Activated T-helper 2 cell treated with anti-CD3 and anti-CD28 coated beads, Interferon-gamma antibody, Interleukin-2, Interleukin-4, amounts not matched to agents 10 μg/mL and 5 μg/mL and 100 μg/mL, durations not matched to agents 14 hours and 24 hours and 36 hours (primary cell): ENCODE measurements at regions of chr6 and their contacts with region 1.

Region 1: DNA sequence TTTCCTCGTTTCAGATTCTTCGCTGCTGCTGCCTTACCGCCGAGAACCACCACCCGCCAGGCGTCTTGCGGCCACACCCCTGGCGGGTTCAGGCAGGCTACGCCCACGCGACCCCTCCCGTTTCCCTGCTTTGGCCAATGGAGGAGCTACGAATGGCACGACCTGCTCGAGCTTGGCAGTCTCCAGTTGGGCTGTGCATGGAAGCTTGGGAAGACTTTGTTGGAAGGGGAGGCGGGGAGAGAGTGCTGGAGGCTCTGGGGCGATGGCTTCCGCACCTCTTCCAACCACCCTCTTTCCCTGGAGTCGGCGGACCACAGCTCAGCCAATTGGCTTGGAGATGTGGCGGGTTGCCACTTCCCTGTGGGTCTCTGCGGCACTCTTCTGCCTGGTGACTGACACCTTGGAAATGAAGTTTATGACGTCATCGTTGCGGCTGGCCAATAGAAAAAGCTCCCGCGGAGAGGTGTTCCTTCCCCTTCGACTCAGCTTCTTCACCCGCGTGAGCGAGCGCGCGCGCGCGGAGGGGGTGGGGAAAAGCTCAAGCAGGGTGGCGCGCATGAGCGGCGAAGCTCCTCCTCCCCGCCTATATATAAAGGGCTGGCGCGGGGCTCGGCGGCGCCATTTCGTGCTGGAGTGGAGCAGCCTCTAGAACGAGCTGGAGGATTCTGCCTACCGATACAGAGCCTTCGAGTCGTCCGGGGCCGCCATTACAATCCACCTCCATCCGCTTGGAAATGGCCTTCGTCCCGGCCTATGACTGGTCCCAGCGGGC is 3.4 kb downstream of the BRD2 start:
- DNase-seq: peak; percentile 99
- H3K4me3 Mint-ChIP-seq: peak overlapping the region; percentile 94
- H3K27ac Mint-ChIP-seq: peak overlapping the region; percentile 98
- H3K4me1 Mint-ChIP-seq: peaks cover 28% of the 10 kb centered on the region
- H3K27me3 Mint-ChIP-seq: no peaks in the 10 kb centered on the region

Region 2: DNA sequence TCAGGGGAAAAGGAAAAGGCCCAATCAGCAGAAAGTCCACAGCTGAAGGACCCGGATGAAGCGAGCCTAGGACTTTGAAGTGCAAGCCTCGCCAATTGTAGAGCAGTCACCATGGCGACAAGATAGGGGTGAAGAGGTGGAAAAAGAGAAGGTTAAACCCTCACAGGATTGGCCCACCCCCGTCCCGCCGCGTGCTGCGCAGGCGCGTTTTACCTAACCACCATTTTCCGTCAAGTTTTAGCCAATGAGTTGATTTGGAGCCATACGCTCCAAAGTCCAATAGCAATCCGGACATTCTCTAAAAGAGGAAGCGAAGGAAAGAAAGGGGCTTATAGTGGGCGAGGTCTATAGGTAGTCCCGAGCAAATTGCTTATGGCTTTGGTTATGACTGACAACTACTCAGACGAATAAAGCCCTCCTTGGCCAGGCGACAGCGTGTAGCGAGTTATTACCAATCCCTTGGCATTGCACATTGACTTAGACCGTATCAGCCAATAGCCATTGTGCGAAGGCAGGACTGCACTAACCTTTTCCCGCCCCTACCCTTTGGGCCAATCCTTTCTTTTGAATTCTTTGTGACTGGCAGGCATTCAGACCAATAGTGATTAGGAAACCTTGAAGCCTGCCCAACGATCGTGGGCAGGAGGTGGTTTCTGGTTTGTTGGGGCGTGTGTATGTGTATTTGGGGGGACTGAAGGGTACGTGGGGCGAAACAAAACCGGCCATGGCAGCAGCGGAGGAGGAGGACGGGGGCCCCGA is 793.8 kb before region 1 on chr6 and contains the start of gene RNF5:
- intact Hi-C with region 1: loop called (anchors 5 kb)
- DNase-seq: peak; percentile 93
- H3K4me3 Mint-ChIP-seq: peak within 1 kb of the TSS; percentile 96
- H3K27ac Mint-ChIP-seq: peak within 1 kb of the TSS; percentile 97
- H3K4me1 Mint-ChIP-seq: peaks cover 50% of the 10 kb centered on the region
- H3K27me3 Mint-ChIP-seq: no peaks in the 10 kb centered on the region
- total RNA-seq, gene RNF5: 61.9 and 63.8 TPM in 2 replicates

Region 3: DNA sequence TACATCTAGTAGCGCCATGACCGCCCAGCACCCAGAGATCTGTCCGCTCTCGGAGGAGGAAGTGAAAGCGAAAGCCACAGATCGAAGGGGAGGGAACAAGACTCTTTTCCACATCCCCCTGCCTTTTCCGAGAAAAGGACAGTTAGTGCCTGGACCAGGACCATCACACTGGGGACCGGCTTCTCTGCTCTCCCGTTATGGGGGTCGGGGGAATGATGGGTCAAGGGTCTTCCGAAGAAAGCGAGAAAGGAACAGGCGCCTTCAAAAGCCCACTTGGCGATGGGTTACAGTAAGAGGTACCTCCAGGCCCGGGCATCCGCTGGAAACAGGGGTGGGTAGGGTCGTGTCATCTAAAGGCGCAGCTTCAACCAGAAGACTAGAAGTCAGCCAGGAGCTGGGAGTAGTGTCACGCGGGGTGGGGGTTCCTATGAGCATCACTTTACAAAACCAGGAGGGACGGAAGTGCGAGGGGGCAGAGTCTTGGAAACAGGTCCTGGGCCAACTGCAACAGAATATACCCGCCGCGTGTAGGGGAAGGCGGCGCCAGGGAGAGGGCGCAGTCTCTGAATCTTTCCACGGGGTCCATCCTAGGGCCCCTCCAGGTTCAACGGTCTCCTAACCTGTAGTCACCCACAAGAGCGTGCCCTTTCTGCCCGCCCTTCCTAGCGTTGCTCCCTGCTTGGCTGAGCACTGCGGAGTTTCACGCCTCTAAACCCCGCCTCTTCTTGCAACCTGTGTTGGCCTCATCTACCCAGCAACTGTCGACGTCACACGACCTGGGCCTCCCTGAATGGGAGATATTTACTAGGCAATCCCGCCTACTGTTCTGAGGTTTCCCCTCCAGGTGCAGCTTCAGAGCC is 127.6 kb before region 1 on chr6 and contains the start of gene PSMB8:
- intact Hi-C with region 1: loop called (anchors 2 kb)
- DNase-seq: peak; percentile 96
- H3K4me3 Mint-ChIP-seq: peak within 1 kb of the TSS; percentile 99
- H3K27ac Mint-ChIP-seq: peak within 1 kb of the TSS; percentile 98
- H3K4me1 Mint-ChIP-seq: peaks cover 66% of the 10 kb centered on the region
- H3K27me3 Mint-ChIP-seq: no peaks in the 10 kb centered on the region
- total RNA-seq, gene PSMB8: 352 and 368 TPM in 2 replicates

Region 4: DNA sequence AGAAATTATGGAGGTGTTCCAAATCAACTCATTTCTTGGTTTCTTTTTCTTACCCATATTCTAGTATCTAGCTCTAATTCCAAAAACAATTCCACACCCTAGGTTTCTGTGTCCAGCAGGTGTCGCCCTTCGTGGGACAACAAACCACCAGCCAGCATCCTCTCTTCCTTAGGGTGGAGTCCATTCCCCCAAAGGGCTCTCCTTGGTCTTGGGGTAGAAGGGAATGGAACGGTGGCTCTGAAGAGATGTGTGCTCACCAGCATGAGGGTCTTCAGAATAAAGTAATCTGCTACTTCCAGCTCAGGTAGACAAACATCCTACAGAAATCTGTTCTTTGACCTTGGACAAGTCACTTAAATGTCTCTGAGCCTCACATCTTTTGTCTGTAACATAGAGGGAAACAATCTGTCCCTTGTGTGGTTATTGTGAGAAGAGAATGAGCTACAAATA is 38.1 kb before region 1 on chr6:
- intact Hi-C with region 1: loop called (anchors 1 kb)
- DNase-seq: peak; percentile 63
- H3K4me3 Mint-ChIP-seq: no peak overlapping the region
- H3K27ac Mint-ChIP-seq: no peak overlapping the region
- H3K4me1 Mint-ChIP-seq: peaks cover 10% of the 10 kb centered on the region
- H3K27me3 Mint-ChIP-seq: peaks cover 15% of the 10 kb centered on the region

Region 5: GRCh38 chr6:32952817-32953739 is 18.7 kb before region 1 on chr6 and contains the start of gene HLA-DMA:
- intact Hi-C with region 1: loop called (anchors 1 kb)
- DNase-seq: peak; percentile 76
- H3K4me3 Mint-ChIP-seq: peak within 1 kb of the TSS; percentile 80
- H3K27ac Mint-ChIP-seq: peak within 1 kb of the TSS; percentile 79
- H3K4me1 Mint-ChIP-seq: peaks cover 45% of the 10 kb centered on the region
- H3K27me3 Mint-ChIP-seq: no peaks in the 10 kb centered on the region
- total RNA-seq, gene HLA-DMA: 15.9 and 19.0 TPM in 2 replicates

Region 6: DNA sequence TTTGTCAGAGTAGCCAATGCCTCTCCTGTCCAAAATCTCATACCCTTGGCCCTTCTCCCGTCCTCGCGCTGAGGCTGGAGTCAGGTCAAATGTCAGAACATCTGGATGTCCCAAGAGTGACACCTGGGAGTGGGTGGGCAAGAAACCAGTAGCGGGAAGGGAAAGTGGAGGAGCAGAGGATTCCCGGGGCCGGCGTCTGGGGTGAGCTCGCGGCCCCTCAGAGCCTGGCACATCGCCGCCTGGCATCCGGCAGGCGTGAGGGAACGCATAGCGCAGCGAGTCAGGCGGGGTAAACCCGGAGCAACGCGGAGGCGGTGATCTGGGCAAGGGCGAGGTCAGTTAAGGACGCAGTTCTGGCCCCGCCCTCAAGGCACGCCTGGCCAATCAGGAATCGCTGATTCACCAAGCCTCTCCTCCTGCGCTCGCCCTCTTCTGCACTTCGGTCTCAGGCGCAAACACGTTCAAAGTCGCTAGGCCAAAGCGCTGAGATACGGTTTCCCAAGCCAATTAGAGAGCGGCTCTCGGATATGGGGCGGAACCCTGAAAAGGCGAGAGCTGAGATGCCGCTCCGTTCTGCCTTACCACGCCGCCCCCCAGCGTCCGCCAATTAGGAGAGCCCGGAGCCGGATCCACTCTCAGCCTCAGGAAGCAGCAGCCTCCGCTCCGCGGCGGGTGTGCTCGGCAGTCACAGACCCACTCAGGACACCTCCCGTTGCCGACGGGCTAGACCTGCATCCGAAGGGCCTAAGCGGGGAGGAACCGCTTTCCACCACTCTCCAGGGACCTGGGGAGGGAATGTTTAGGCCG is 277.4 kb after region 1 on chr6:
- intact Hi-C with region 1: loop called (anchors 1 kb)
- DNase-seq: peak; percentile 97
- H3K4me3 Mint-ChIP-seq: peak overlapping the region; percentile 88
- H3K27ac Mint-ChIP-seq: peak overlapping the region; percentile 92
- H3K4me1 Mint-ChIP-seq: peaks cover 32% of the 10 kb centered on the region
- H3K27me3 Mint-ChIP-seq: no peaks in the 10 kb centered on the region

Region 7: GRCh38 chr6:33410050-33410710 is 438.4 kb after region 1 on chr6:
- intact Hi-C with region 1: loop called (anchors 2 kb)
- DNase-seq: peak; percentile 98
- H3K4me3 Mint-ChIP-seq: peak overlapping the region; percentile 88
- H3K27ac Mint-ChIP-seq: peak overlapping the region; percentile 93
- H3K4me1 Mint-ChIP-seq: peaks cover 38% of the 10 kb centered on the region
- H3K27me3 Mint-ChIP-seq: no peaks in the 10 kb centered on the region